ENCODE measurements at regions of chr15 and their contacts with region 1.

Region 1: GRCh38 chr15:73964736-73965093 is 27.4 kb downstream of the STOML1 start:
- DNase-seq: peak; percentile 86 to 87
- ATAC-seq: peak; percentile 89 to 96 (median 92)
- H3K4me3 ChIP-seq: no peak overlapping the region
- H3K27ac ChIP-seq: peak overlapping the region in 1 of 10 donors; percentile 32
- H3K4me1 ChIP-seq: peaks cover 0 to 21% (median 5%) of the 10 kb centered on the region in 9 donors
- H3K27me3 ChIP-seq: peaks cover 0 to 4% (median 0%) of the 10 kb centered on the region in 7 donors
- CTCF ChIP-seq: peak; percentile 92 to 98 (median 95)

Region 2: GRCh38 chr15:73873889-73874511 is 90.7 kb before region 1 on chr15:
- intact Hi-C with region 1: loop called in 2 of 10 experiments (anchors 5 kb)
- DNase-seq: no peak
- ATAC-seq: no peak
- H3K4me3 ChIP-seq: no peak overlapping the region
- H3K27ac ChIP-seq: no peak overlapping the region
- H3K4me1 ChIP-seq: peaks cover 5 to 23% (median 20%) of the 10 kb centered on the region in 9 donors
- H3K27me3 ChIP-seq: peaks cover 0 to 12% (median 0%) of the 10 kb centered on the region in 7 donors
- CTCF ChIP-seq: peak; percentile 50 to 76 (median 72)

Region 3: DNA sequence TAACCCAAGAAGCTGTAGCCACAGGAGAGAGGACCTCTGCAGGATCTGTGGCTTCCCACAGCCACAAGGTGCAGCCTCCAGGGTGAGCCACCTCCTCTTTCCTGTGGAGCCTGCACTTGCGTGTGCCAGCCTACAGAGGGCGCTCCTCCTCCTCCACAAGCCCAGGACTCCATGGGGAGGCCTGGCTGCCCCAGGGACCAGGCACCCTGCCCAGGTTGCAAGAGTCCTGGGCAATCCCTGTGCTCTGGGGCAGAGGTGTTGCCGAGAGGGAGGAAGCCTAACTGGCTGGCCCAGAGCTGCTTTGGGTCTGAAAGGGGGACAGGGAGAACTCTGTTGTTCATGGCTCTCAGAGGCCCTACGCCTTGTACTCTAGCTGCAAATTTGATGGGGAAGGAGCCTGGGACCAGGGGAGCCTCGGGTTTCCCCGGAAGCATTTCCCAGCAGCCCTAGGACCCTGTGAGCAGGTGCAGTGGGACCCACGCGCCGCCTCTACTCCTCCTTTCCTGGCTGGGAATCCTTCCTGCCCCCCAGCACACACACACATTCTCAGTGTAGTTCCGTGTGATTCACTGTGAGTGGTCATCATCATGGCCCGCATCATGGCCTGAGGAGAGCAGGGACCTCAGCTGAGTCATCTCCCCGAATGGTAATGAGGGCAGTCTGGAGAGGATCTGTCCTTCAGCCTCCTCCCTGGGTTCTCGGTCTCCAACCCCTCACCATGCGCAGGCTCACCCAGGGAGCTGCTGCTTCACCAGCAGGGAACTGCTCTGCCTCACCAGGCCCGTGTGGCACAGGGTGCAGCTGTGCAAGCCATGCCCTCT is 67.1 kb before region 1 on chr15:
- intact Hi-C with region 1: loop called in 3 of 10 experiments (anchors 5 to 10 kb)
- DNase-seq: peak; percentile 44 to 66
- ATAC-seq: peak; percentile 74 to 95 (median 88)
- H3K4me3 ChIP-seq: no peak overlapping the region
- H3K27ac ChIP-seq: no peak overlapping the region
- H3K4me1 ChIP-seq: peaks cover 0 to 4% (median 0%) of the 10 kb centered on the region in 9 donors
- H3K27me3 ChIP-seq: peaks cover 0 to 4% (median 0%) of the 10 kb centered on the region in 7 donors
- CTCF ChIP-seq: peak; percentile 72 to 92 (median 83)

Region 4: DNA sequence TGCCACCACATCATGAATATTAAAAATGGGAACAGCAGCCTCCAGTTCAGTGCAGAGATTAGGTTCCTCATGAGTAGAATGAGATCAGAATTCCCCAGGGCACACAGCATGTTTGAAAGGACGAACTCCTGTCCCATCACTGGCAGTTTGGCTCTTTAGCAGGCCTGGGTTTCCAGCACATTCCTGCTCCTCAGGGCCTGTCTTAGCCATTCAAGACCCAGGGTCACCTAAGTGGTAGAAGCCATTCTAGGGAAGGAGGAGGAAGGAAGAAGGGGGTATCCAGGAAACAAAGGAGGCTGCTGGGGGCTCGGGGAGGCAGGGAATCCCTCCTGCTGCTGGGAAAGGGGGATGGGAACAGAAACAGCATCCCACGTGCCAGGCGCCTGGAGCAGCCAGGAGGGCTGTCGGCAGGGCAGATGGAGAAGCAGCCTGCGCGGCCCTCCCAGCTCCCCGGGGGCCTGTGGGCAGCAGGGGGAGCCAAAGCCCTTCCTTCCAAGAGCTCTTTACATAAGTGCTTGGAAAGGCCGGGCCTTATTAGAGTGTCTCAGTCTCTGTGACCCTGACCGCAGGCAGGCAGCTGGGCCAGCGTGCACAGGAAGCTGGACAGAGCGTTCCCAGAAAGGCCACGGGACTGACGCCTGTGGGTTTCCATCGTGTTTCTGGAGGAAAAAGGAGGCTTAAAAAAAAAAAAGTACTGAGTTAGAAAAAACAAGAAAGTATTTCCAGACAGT is 13.7 kb before region 1 on chr15:
- intact Hi-C with region 1: loop called in 4 of 10 experiments (anchors 1 to 2 kb)
- DNase-seq: peak; percentile 91 to 96
- ATAC-seq: peak; percentile 90 to 98 (median 96)
- H3K4me3 ChIP-seq: no peak overlapping the region
- H3K27ac ChIP-seq: peak overlapping the region; percentile 87 to 97 (median 92)
- H3K4me1 ChIP-seq: peaks cover 15 to 44% (median 33%) of the 10 kb centered on the region in 9 donors
- H3K27me3 ChIP-seq: no peaks in the 10 kb centered on the region
- CTCF ChIP-seq: peak; percentile 58 to 94 (median 87)